Colonic mucosa (tissue), 4 donors: ENCODE measurements at regions of chr11 and their contacts with region 1.

Region 1: GRCh38 chr11:1652771-1653540 is 23.4 kb downstream of the KRTAP5-5 start:
- DNase-seq: peak; percentile 78
- H3K4me3 ChIP-seq: no peak overlapping the region
- H3K27ac ChIP-seq: no peak overlapping the region
- H3K4me1 ChIP-seq: no peaks in the 10 kb centered on the region
- H3K27me3 ChIP-seq: no peaks in the 10 kb centered on the region
- CTCF ChIP-seq: peak; percentile 98

Region 2: DNA sequence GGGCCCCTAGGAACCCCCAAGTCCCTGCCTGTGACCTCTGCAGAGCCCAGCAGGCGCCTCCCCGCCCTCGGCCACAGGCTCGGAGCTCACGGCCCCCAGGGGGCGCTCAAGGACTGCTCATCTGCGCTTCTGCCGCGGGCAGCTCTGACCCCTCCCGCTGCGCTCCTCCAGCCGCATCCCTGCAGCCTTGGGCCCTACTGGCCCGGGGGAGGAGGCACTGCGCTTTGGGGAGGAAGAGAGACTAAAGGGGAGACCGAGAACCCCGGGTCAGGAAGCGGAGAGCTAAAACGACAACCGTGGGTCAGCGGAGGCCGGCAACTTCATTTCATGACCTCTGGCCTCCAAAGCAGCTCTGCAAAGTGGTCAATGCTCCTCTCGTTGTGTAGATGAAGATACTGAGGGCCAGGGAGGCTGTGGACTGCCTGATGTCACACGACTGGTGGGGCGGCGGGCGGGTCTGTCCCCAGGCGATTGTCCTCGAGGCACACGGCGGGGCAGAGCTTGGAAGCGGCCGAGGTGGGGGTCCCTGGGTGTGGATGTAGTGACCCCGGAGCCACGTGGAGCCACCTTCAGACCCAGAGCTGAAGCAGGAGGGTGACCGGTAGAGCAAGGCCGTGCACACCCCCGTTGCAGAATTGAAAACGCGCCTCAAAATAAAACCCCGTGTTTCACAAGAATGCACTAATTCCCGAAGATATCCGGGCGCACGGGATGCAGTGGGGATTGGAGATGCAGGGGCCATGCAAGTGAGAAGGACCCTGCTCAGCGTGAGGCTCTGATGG is 41.3 kb after region 1 on chr11:
- intact Hi-C with region 1: loop called (anchors 5 kb)
- DNase-seq: peak; percentile 90
- H3K4me3 ChIP-seq: peak overlapping the region; percentile 11
- H3K27ac ChIP-seq: no peak overlapping the region
- H3K4me1 ChIP-seq: peaks cover 5% of the 10 kb centered on the region
- H3K27me3 ChIP-seq: peaks cover 4% of the 10 kb centered on the region
- CTCF ChIP-seq: peak; percentile 97

Region 3: GRCh38 chr11:1832211-1832919 is 179.4 kb after region 1 on chr11:
- intact Hi-C with region 1: loop called (anchors 5 kb)
- DNase-seq: peak; percentile 68
- H3K4me3 ChIP-seq: peak overlapping the region; percentile 10
- H3K27ac ChIP-seq: no peak overlapping the region
- H3K4me1 ChIP-seq: peaks cover 28% of the 10 kb centered on the region
- H3K27me3 ChIP-seq: no peaks in the 10 kb centered on the region
- CTCF ChIP-seq: peak; percentile 98